Activated T-helper 1 cell treated with anti-CD3 and anti-CD28 coated beads, Interleukin-12 subunit alpha, Interleukin-12 subunit beta, Interleukin-2, Interleukin-4 antibody, amounts not matched to agents 30 ng/mL and 10 ng/mL and 1 ng/mL, durations not matched to agents 14 hours and 24 hours and 36 hours (primary cell): ENCODE measurements at regions of chr16 and their contacts with region 1.

Region 1: GRCh38 chr16:57475711-57476339 is 10.5 kb downstream of the DOK4 start:
- DNase-seq: peak; percentile 81
- H3K4me3 Mint-ChIP-seq: peak overlapping the region; percentile 45
- H3K27ac Mint-ChIP-seq: peak overlapping the region; percentile 52
- H3K4me1 Mint-ChIP-seq: peaks cover 18% of the 10 kb centered on the region
- H3K27me3 Mint-ChIP-seq: no peaks in the 10 kb centered on the region

Region 2: GRCh38 chr16:57335366-57335765 is 140.5 kb before region 1 on chr16:
- intact Hi-C with region 1: no loop called
- DNase-seq: no peak
- H3K4me3 Mint-ChIP-seq: no peak overlapping the region
- H3K27ac Mint-ChIP-seq: no peak overlapping the region
- H3K4me1 Mint-ChIP-seq: peaks cover 15% of the 10 kb centered on the region
- H3K27me3 Mint-ChIP-seq: peaks cover 30% of the 10 kb centered on the region

Region 3: GRCh38 chr16:57485916-57486857 is 10.4 kb after region 1 on chr16 and contains the start of gene DOK4:
- intact Hi-C with region 1: loop called (anchors 1 kb)
- DNase-seq: peak; percentile 71
- H3K4me3 Mint-ChIP-seq: peak within 1 kb of the TSS; percentile 84
- H3K27ac Mint-ChIP-seq: peak within 1 kb of the TSS; percentile 61
- H3K4me1 Mint-ChIP-seq: peaks cover 20% of the 10 kb centered on the region
- H3K27me3 Mint-ChIP-seq: peaks cover 20% of the 10 kb centered on the region
- total RNA-seq, gene DOK4: 4.4 and 4.9 TPM in 2 replicates